A549 (cell line): ENCODE measurements at regions of chr20 and their contacts with region 1.

Region 1: DNA sequence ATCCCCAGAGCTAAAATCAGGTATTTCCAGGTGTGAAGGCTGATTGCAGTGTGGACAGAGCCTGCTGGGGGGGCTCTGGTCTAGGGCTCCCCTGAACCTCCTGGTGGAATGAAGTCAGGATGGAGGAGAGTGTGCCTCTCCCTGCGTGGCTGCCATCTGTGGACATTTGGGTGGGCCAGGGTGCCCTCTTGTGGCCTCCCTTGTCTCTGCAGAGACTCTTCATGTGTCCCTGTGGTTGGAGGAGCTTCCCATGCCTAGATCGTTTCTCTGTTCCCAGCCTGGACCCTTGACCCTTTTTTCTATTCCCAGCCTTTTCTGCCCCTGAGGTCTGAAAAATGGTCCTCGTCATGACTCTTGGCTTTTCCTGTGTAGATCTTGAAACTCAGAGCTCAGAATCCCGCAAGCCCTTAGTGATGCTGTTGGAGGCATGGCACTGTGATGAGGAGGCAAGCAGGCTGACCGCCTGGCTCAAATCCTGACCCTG is 9.9 kb upstream of the PSMF1 start:
- DNase-seq: peak; percentile 61 to 75
- ATAC-seq: peak; percentile 96 to 98
- H3K4me3 ChIP-seq: no peak overlapping the region
- H3K27ac ChIP-seq: no peak overlapping the region
- H3K4me1 ChIP-seq: no peaks in the 10 kb centered on the region
- CTCF ChIP-seq: peak; percentile 74
- EP300 ChIP-seq: no peak
- POLR2A ChIP-seq: no peak
- RAD21 ChIP-seq: peak; percentile 63 to 68

Region 2: DNA sequence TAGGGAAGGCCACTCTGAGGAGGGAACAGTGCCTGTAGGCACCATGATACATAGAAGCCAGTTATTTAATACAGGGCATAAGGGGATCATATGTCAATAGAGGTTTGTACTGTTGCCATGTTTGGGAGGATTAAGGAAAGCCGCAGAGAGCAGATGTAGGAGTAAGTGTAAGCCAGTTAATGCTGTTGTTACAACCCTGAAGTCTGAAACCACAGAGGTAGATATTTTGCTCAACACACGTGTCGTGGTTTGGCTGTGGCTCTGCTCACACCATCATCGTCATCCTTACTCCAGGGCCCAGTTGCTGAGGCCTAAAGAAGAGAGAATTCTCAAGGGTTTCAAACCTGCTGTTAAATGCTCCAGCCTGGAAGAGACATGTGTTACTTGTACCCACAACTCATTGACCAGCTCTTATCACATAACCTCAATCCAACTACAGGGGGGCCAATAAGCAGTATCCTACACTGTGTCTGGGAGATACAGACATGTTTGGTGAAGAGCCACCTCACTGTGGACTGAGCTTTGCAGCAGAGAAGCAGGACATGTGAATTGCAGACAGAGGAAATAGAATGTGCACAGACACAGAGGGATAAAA is 21.1 kb before region 1 on chr20:
- CTCF ChIA-PET with region 1: interaction called, 15 read pairs
- POLR2A ChIA-PET with region 1: no interaction called
- DNase-seq: no peak
- ATAC-seq: no peak
- H3K4me3 ChIP-seq: no peak overlapping the region
- H3K27ac ChIP-seq: no peak overlapping the region
- H3K4me1 ChIP-seq: no peaks in the 10 kb centered on the region
- CTCF ChIP-seq: no peak
- EP300 ChIP-seq: no peak
- POLR2A ChIP-seq: no peak
- RAD21 ChIP-seq: no peak

Region 3: GRCh38 chr20:1118336-1119127 is 10.1 kb after region 1 on chr20 and contains the start of gene PSMF1:
- CTCF ChIA-PET with region 1: interaction called, 50 read pairs
- POLR2A ChIA-PET with region 1: no interaction called
- DNase-seq: peak; percentile 96
- ATAC-seq: peak; percentile 96 to 98
- H3K4me3 ChIP-seq: peak within 1 kb of the TSS; percentile 97
- H3K27ac ChIP-seq: peak within 1 kb of the TSS; percentile 91 to 92
- H3K4me1 ChIP-seq: peaks cover 45% of the 10 kb centered on the region
- CTCF ChIP-seq: no peak
- EP300 ChIP-seq: peak in 1 of 2 experiments; percentile 49; a peak in 2 of 5 replicates
- POLR2A ChIP-seq: peak; percentile 97
- RAD21 ChIP-seq: peak in 1 of 2 experiments; percentile 21; a peak in 1 of 5 replicates
- polyA plus RNA-seq, gene PSMF1: 157 and 168 TPM in 2 replicates

Region 4: DNA sequence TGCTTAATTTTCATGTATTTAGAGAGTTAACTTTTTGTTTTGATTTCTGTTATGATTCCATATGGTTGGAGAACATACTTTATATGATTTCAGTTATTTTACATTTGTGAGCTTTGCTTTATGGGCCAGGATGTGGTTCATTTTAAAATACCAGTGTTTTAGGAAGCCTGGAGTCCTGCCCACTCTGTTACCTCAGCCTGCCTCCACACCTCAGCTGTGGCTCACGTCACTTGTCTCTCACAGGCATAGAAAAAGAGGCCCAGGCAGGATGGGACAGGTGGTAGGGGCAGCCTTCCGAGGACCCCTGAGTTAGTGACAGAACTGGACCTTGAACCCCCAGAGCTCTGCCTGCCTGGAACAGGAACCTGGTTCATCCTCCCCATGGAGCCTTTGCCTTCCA is 25.9 kb after region 1 on chr20:
- CTCF ChIA-PET with region 1: interaction called, 10 read pairs
- POLR2A ChIA-PET with region 1: no interaction called
- DNase-seq: no peak
- ATAC-seq: no peak
- H3K4me3 ChIP-seq: no peak overlapping the region
- H3K27ac ChIP-seq: no peak overlapping the region
- H3K4me1 ChIP-seq: no peaks in the 10 kb centered on the region
- CTCF ChIP-seq: no peak
- EP300 ChIP-seq: no peak
- POLR2A ChIP-seq: no peak
- RAD21 ChIP-seq: no peak

Region 5: DNA sequence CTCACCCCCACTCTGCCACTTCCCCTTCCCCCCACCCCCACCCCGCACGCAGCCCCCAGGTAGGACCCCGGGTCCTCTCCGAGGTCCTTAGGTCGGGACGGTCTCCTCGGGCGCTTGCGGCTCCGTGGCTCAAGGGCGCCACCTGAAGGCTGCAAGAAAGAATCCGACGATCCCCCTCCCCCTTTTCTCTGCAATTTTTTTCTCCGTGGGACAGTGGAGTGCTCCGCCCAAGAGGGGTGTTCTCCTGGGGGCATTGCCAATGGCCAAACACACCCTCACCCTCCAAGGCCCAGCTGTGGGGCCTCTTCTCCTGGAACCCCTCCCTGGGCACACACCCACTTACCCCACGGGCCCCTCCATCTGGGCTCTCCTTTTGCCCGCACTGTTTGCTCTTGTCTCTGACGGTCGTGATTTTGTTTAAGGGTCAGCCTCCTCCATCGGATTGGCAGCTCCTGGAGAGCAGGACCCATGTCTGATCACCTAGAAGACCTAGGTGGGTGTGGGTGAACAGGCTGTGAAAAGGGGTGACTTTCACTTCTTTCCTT is 77.4 kb after region 1 on chr20:
- CTCF ChIA-PET with region 1: interaction called, 19 read pairs
- POLR2A ChIA-PET with region 1: no interaction called
- DNase-seq: peak; percentile 78 to 81
- ATAC-seq: peak; percentile 72 to 87
- H3K4me3 ChIP-seq: peak overlapping the region; percentile 94
- H3K27ac ChIP-seq: peak overlapping the region; percentile 76 to 90
- H3K4me1 ChIP-seq: peaks cover 16% of the 10 kb centered on the region
- CTCF ChIP-seq: peak; percentile 79
- EP300 ChIP-seq: no peak
- POLR2A ChIP-seq: no peak
- RAD21 ChIP-seq: peak; percentile 64 to 83

Region 6: GRCh38 chr20:1266167-1266973 is 157.9 kb after region 1 on chr20 and contains the start of gene SNPH:
- CTCF ChIA-PET with region 1: no interaction called
- POLR2A ChIA-PET with region 1: no interaction called
- DNase-seq: peak; percentile 77 to 82
- ATAC-seq: peak; percentile 96 to 97
- H3K4me3 ChIP-seq: peak within 1 kb of the TSS; percentile 89
- H3K27ac ChIP-seq: peak within 1 kb of the TSS; percentile 63 to 88
- H3K4me1 ChIP-seq: peaks cover 21% of the 10 kb centered on the region
- CTCF ChIP-seq: no peak
- EP300 ChIP-seq: no peak
- POLR2A ChIP-seq: peak; percentile 57
- RAD21 ChIP-seq: no peak
- polyA plus RNA-seq, gene SNPH: 1.1 and 2.0 TPM in 2 replicates